ENCODE measurements at regions of chr16 and their contacts with region 1.

Region 1: GRCh38 chr16:48353565-48354163 is 31.5 kb downstream of the SIAH1 start:
- DNase-seq: peak; percentile 44
- H3K4me3 ChIP-seq: no peak overlapping the region
- H3K27ac ChIP-seq: no peak overlapping the region
- H3K4me1 ChIP-seq: no peaks in the 10 kb centered on the region
- H3K27me3 ChIP-seq: no peaks in the 10 kb centered on the region
- CTCF ChIP-seq: peak; percentile 57 to 88 (median 84)
- POLR2A ChIP-seq: no peak

Region 2: GRCh38 chr16:48276102-48276501 is 77.6 kb before region 1 on chr16:
- intact Hi-C with region 1: loop called (anchors 10 kb)
- DNase-seq: peak; percentile 19
- H3K4me3 ChIP-seq: no peak overlapping the region
- H3K27ac ChIP-seq: peak overlapping the region; percentile 28 to 50
- H3K4me1 ChIP-seq: no peaks in the 10 kb centered on the region
- H3K27me3 ChIP-seq: no peaks in the 10 kb centered on the region
- CTCF ChIP-seq: no peak
- POLR2A ChIP-seq: no peak

Region 3: GRCh38 chr16:48542020-48542473 is 188.4 kb after region 1 on chr16:
- intact Hi-C with region 1: loop called (anchors 5 kb)
- DNase-seq: peak; percentile 42
- H3K4me3 ChIP-seq: no peak overlapping the region
- H3K27ac ChIP-seq: peak overlapping the region in 1 of 2 donors; percentile 4
- H3K4me1 ChIP-seq: no peaks in the 10 kb centered on the region
- H3K27me3 ChIP-seq: no peaks in the 10 kb centered on the region
- CTCF ChIP-seq: peak in 3 of 4 experiments; percentile 44 to 64 (median 60)
- POLR2A ChIP-seq: no peak

Region 4: DNA sequence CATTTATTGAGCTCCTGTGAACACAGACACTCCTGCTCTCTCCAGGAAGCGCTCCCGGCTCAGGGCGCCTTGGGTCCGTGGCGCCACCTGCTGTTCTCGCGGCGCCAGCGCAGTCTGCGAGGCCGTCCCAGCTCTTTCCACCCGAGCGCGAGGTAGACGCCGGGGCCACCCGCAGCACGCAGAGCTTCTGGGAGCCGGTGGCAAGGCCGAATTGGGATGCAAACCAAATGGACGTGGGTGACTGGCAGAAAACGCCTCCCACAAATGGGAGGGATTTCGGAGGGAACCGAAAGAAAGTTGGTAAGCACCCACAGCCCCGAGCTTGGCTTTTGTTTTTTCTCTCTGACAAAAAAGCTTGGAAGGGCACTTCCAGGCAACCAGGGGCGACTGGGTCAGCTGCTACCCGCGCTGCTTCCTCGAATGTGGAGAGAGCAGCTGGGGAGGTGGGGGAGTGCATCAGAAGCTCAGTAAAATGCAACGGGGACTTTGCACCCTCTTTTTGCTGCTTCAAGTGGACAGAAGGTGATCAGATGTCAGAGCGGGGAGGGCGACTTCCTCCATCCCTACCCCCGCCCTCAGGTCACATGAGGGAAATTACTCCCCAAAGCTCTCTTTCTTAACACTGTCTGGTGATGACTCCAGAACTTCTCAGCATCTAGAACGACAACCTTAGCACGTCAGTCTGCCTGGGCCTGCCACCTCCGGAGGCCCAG is 269.8 kb after region 1 on chr16:
- intact Hi-C with region 1: loop called (anchors 5 kb)
- DNase-seq: peak; percentile 78
- H3K4me3 ChIP-seq: peak overlapping the region; percentile 20 to 33
- H3K27ac ChIP-seq: peak overlapping the region; percentile 34 to 55
- H3K4me1 ChIP-seq: no peaks in the 10 kb centered on the region
- H3K27me3 ChIP-seq: no peaks in the 10 kb centered on the region
- CTCF ChIP-seq: peak; percentile 90 to 98 (median 96)
- POLR2A ChIP-seq: peak; percentile 34